Common myeloid progenitor, CD34-positive (primary cell): ENCODE measurements at regions of chr3 and their contacts with region 1.

Region 1: GRCh38 chr3:108029466-108029865 is 61.4 kb downstream of the CD47 start:
- DNase-seq: no peak
- H3K4me3 ChIP-seq: no peak overlapping the region
- H3K27ac ChIP-seq: no peak overlapping the region
- H3K4me1 ChIP-seq: peaks cover 0 to 3% (median under 1%) of the 10 kb centered on the region in 4 experiments
- H3K27me3 ChIP-seq: no peaks in the 10 kb centered on the region

Region 2: GRCh38 chr3:108040481-108040880 is 11.0 kb after region 1 on chr3:
- CTCF ChIA-PET with region 1: interaction called, 10 read pairs
- POLR2A ChIA-PET with region 1: no interaction called
- DNase-seq: no peak
- H3K4me3 ChIP-seq: no peak overlapping the region
- H3K27ac ChIP-seq: no peak overlapping the region
- H3K4me1 ChIP-seq: peaks cover 0 to 9% (median 5%) of the 10 kb centered on the region in 4 experiments
- H3K27me3 ChIP-seq: no peaks in the 10 kb centered on the region